Posterior cingulate gyrus (tissue), 11 donors: ENCODE measurements at regions of chr15 and their contacts with region 1.

Region 1: DNA sequence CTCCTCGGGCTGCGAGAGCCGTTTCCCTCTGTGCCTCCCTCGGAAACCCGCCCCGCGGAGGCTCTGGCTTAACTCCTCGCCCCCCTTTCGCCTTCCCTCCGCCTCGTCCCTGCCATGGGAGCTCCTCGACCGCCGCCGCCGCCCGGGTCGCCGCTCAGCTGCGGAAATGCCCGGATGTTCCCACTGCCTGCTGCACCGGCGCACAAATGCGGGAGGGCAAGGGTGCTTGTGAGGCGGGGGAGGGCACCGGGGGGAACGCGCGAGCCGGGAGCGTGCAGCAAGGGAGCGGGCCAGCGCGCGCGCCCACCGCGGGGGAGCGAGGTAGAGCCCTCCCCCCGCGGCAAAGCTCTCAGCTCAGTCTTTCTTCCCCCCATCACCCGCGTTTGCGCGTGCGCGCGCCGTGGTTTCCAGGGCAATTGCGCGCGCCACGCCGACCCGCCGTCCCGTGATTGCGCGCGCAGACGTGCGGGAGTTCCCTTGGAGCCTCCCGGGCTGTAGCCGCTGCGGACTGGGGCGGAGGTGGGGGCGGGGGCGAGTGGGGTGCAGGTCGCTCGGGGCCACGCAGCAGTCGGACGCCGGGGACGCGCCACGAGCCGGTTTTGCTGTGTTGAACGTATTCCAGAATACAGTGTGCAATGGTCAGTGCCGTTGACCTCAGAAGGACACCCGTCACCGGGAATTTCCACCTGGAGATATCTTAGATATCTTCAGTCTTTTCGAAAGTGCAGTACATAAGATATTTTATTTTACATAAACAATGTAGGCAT is at the start of gene DMXL2:
- DNase-seq: peak; percentile 79 to 98 (median 86)

Region 2: DNA sequence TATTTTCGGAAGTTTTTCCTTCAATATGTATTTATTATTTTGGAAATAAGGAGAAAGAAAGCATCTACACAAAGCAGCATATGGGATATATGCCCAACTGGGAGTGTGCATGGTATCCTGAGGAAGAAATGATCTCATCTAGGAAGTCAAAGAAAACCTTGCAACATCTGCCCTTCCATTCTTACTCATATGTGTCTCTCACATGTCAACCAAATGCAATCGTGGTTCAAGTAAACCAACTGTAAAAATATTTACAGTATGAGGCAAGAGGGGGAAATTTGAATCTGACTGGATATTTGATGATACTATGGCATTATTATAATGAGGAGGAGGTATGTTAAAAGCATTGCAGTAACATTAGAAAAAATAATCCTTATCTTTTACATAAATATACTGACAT is 55.3 kb after region 1 on chr15:
- intact Hi-C with region 1: loop called (anchors 5 kb)
- DNase-seq: no peak

Region 3: DNA sequence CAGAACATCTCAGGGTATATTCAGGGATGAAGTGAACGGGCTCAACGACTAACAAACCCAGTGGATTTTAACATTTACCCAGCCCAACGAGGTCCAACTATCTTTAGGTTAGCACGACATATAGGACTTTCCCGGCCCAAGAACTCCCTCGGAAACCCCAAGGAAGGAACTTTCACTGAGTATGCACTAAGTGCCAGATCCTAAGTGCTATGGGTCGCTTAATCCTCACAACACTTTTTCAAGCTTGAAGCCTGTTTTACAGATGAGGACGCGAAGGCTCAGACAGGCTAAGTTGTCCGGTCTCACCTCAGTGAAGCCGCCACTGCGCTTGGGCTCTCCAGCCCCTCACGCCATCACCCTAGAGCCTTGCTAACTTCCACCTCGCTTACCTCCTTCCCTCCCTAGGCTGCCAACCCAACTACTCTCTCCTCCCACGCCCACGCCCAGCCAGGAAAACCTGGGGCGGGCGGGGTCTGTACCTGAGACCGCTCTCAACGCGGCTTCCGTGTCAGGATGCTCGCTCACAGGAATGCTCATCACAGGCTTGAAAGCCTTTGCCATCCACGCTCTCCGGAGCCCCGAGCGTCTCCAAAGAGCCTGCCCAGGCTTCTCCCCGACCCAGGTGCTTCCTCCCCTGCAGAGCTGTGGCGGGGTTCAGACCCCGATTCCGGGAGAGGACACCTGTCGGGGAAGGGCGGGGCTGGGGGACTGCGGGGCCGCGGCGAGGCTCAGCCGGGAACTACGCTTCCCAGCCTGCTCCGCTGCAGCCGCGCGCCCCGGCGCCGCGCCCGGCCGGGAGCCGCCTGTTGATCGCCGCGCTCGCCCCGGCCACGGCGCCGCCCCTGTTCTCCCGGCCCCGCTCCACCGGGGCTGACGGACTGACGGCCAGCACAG is 128.3 kb after region 1 on chr15 and contains the start of gene TMOD2:
- intact Hi-C with region 1: loop called (anchors 5 kb)
- DNase-seq: peak; percentile 38 to 95 (median 68)

Region 4: GRCh38 chr15:51816611-51817010 is 193.8 kb after region 1 on chr15:
- intact Hi-C with region 1: no loop called
- DNase-seq: no peak